ENCODE measurements at regions of chr17 and their contacts with region 1.

Region 1: DNA sequence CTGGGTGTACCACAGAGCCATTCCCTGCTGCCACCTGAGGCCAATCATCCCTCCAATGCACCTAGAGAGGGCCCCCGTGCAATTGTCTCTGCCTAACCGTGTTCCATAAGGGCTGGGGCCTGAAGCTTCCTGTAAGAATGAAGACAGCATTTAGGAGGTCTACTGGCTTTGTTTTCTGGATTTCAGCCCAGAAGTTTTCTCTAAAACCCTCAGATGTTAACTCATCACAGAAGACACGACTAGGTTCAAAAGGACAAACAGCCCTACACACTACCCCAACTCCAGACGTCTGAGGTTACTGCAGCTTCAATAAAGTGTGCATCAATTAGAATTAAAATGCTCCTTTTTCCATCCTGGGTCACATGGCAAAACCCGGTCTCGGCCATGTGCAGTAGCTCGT is 10.8 kb upstream of the DRG2 start:
- DNase-seq: no peak
- ATAC-seq: no peak
- H3K4me3 ChIP-seq: no peak overlapping the region
- H3K27ac ChIP-seq: no peak overlapping the region
- H3K4me1 ChIP-seq: no peaks in the 10 kb centered on the region
- H3K27me3 ChIP-seq: no peaks in the 10 kb centered on the region
- CTCF ChIP-seq: no peak

Region 2: DNA sequence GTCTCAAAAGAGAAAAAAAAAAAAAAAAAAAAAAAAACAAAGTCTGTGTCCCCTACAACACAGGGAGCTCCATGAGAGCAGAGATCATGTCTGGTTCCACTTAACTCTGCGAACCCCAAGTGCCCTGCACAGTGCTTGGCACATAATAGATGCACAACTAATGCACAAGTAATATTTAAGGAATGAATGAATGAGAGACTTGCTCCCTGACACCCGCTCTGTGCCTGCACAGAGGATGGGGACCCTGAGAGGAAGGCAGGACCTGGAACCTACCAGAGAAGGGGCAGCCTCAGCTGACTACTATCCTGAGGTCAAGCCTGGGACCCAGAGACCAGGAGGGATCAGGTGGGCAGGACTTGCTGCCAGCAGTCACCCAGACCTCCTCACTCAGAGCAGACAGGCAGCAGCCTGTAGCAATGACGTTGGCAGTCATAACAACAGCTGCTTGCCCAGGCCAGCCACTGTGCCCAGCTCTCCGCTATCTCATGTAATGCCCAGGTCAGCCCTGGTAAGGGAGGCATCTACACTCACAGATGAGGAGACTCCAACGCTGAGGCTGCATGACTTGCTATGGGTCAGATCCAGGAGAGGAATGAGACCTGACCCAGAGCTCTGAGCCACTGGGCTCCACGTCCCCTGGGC is 34.5 kb after region 1 on chr17:
- CTCF ChIA-PET with region 1: no interaction called
- POLR2A ChIA-PET with region 1: interaction called, 13 read pairs
- in situ Hi-C with region 1: no loop called
- intact Hi-C with region 1: no loop called
- DNase-seq: no peak
- ATAC-seq: 0 out of 2 replicates have a peak, but pooled peaks have one; percentile 6
- H3K4me3 ChIP-seq: no peak overlapping the region
- H3K27ac ChIP-seq: no peak overlapping the region
- H3K4me1 ChIP-seq: no peaks in the 10 kb centered on the region
- H3K27me3 ChIP-seq: no peaks in the 10 kb centered on the region
- CTCF ChIP-seq: no peak